OCI-LY7 (cell line): ENCODE measurements at regions of chr15 and their contacts with region 1.

Region 1: GRCh38 chr15:70200511-70201424 is 103.1 kb upstream of the TLE3 start:
- DNase-seq: no peak
- H3K4me3 ChIP-seq: no peak overlapping the region
- H3K27ac ChIP-seq: no peak overlapping the region
- H3K4me1 ChIP-seq: peaks cover 14% of the 10 kb centered on the region
- CTCF ChIP-seq: no peak

Region 2: GRCh38 chr15:69749797-69750196 is 451.0 kb before region 1 on chr15:
- CTCF ChIA-PET with region 1: no interaction called
- POLR2A ChIA-PET with region 1: no interaction called
- intact Hi-C with region 1: loop called (anchors 10 kb)
- DNase-seq: peak; percentile 63
- H3K4me3 ChIP-seq: no peak overlapping the region
- H3K27ac ChIP-seq: no peak overlapping the region
- H3K4me1 ChIP-seq: peaks cover 13% of the 10 kb centered on the region
- CTCF ChIP-seq: peak; percentile 79

Region 3: GRCh38 chr15:70152070-70152480 is 48.7 kb before region 1 on chr15:
- CTCF ChIA-PET with region 1: no interaction called
- POLR2A ChIA-PET with region 1: no interaction called
- intact Hi-C with region 1: no loop called
- DNase-seq: no peak
- H3K4me3 ChIP-seq: no peak overlapping the region
- H3K27ac ChIP-seq: no peak overlapping the region
- H3K4me1 ChIP-seq: no peaks in the 10 kb centered on the region
- CTCF ChIP-seq: no peak